ENCODE measurements at regions of chr2 and their contacts with region 1.

Region 1: GRCh38 chr2:73176881-73177644 is 25.3 kb upstream of the NOTO start:
- DNase-seq: peak; percentile 57
- ATAC-seq: peak; percentile 96
- H3K4me3 ChIP-seq: peak overlapping the region; percentile 27 to 45
- H3K27ac ChIP-seq: no peak overlapping the region; the same call in 1 of the 2 replicates
- H3K4me1 ChIP-seq: peaks cover 9 to 14% of the 10 kb centered on the region in 2 experiments; a peak in 3 of 4 replicates
- H3K27me3 ChIP-seq: no peaks in the 10 kb centered on the region
- CTCF ChIP-seq: peak; percentile 87 to 99 (median 95)
- POLR2A ChIP-seq: no peak
- RAD21 ChIP-seq: peak; percentile 97

Region 2: DNA sequence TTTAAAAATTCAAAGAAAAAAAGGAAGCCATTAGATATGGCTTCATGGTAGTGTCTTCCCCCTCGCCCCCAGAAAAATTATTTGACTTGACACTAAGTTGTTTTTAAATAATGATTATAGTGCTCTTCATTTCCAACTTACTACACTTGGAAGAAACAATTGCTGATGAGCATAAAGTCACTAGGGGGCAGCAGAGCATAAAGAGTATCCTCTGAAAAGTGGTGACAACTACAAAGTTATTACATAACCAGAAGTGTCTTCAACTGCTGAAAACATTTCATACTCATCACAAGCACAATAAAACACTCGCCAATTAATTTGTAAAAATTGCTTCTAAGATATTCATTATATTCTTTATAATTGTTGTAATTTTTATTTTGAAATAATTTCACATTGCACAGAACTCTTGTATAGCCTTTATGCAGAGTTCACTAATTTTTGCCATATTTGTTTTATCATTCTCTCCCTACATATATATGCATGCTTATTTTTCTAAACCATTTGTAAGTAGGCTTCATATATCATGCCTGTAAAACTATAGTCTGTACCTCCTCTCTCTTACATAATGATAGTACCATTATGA is 406.1 kb before region 1 on chr2:
- CTCF ChIA-PET with region 1: no interaction called
- POLR2A ChIA-PET with region 1: no interaction called
- RAD21 ChIA-PET with region 1: no interaction called
- intact Hi-C with region 1: loop called (anchors 5 kb)
- DNase-seq: peak; percentile 56
- ATAC-seq: peak; percentile 72; the same call in 1 of the 2 replicates
- H3K4me3 ChIP-seq: no peak overlapping the region
- H3K27ac ChIP-seq: no peak overlapping the region
- H3K4me1 ChIP-seq: 0 out of 4 replicates have a peak, but pooled peaks cover 0 to 4% of the 10 kb centered on the region in 2 experiments
- H3K27me3 ChIP-seq: no peaks in the 10 kb centered on the region
- CTCF ChIP-seq: peak; percentile 68 to 88 (median 85)
- POLR2A ChIP-seq: no peak
- RAD21 ChIP-seq: peak; percentile 93

Region 3: DNA sequence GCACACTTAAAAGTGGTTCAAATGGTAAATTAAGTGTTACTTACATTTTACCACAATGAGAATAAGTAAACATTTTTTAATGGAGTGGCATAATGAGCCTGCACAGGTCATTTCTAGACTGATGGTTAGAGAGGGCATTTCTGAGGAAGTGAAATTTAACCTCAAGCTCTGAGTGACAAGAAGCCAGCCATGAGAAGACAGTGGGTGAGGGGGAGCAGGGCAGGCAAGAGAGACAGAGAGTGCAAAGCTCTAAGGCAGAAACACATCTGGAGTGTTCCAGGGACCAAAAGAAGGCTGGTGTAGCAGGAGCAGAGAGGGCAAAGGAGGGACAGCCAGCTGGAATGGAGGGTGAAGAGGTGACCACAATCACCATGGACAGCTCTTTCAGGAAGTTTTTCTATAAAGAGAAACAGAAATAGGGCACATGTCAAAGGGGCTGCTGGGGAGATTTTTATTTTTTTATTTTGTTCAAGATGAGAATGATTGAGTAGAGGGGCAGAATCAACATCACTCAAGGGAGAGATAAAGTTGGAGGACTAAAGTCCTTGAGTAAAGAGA is 330.4 kb before region 1 on chr2:
- CTCF ChIA-PET with region 1: no interaction called
- POLR2A ChIA-PET with region 1: no interaction called
- RAD21 ChIA-PET with region 1: no interaction called
- intact Hi-C with region 1: no loop called
- DNase-seq: no peak
- ATAC-seq: no peak
- H3K4me3 ChIP-seq: no peak overlapping the region
- H3K27ac ChIP-seq: no peak overlapping the region
- H3K4me1 ChIP-seq: no peaks in the 10 kb centered on the region
- H3K27me3 ChIP-seq: no peaks in the 10 kb centered on the region; the same call in 1 of the 2 replicates
- CTCF ChIP-seq: no peak
- POLR2A ChIP-seq: no peak
- RAD21 ChIP-seq: no peak

Region 4: GRCh38 chr2:72908741-72909140 is 268.3 kb before region 1 on chr2:
- CTCF ChIA-PET with region 1: no interaction called
- POLR2A ChIA-PET with region 1: no interaction called
- RAD21 ChIA-PET with region 1: no interaction called
- intact Hi-C with region 1: loop called (anchors 5 kb)
- DNase-seq: no peak
- ATAC-seq: no peak
- H3K4me3 ChIP-seq: no peak overlapping the region
- H3K27ac ChIP-seq: no peak overlapping the region
- H3K4me1 ChIP-seq: peaks cover 0 to 3% of the 10 kb centered on the region in 2 experiments; a peak in 1 of 4 replicates
- H3K27me3 ChIP-seq: peaks cover 17% of the 10 kb centered on the region; the same call in 1 of the 2 replicates
- CTCF ChIP-seq: no peak
- POLR2A ChIP-seq: no peak
- RAD21 ChIP-seq: no peak

Region 5: DNA sequence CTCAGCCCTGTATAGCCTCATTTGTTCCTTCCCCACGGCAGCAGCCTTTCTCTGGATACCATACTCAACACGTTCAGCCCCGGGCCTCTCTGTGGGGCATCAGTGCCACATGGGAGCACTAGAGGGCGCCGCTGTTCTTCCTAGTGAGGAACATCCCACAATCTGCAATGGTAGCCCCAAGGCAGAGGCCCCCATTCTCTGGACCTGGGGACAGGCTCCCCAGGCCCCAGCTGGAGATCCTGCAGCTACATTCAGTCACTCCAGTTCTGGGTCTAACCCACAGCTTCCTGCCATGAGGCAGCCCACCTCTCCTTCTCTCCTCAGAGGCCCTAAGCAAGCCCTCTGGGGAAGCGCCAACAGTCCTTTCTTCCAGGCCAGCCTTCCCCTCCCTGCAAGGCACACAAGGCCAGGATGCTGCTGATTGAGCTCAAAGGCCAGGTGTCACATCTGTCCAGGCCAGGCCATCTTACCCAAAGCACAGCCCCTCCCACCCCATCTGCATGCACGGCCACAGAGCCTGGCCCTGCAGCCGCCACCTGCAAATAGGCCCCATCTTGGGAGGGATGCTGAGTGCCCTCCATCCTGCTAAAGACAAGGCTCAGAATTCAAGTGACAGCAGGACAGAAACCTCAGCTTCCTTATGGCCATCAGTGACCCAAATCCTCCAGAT is 91.2 kb before region 1 on chr2:
- CTCF ChIA-PET with region 1: interaction called, 6 read pairs
- POLR2A ChIA-PET with region 1: no interaction called
- RAD21 ChIA-PET with region 1: no interaction called
- intact Hi-C with region 1: loop called (anchors 5 kb)
- DNase-seq: no peak
- ATAC-seq: peak; percentile 93
- H3K4me3 ChIP-seq: no peak overlapping the region
- H3K27ac ChIP-seq: no peak overlapping the region
- H3K4me1 ChIP-seq: peaks cover 0 to 14% of the 10 kb centered on the region in 2 experiments; a peak in 2 of 4 replicates
- H3K27me3 ChIP-seq: no peaks in the 10 kb centered on the region
- CTCF ChIP-seq: peak; percentile 91 to 97 (median 97)
- POLR2A ChIP-seq: no peak
- RAD21 ChIP-seq: peak; percentile 95

Region 6: GRCh38 chr2:73187549-73187948 is 10.5 kb after region 1 on chr2:
- CTCF ChIA-PET with region 1: interaction called, 14 read pairs
- POLR2A ChIA-PET with region 1: no interaction called
- RAD21 ChIA-PET with region 1: no interaction called
- intact Hi-C with region 1: no loop called
- DNase-seq: no peak
- ATAC-seq: no peak
- H3K4me3 ChIP-seq: no peak overlapping the region
- H3K27ac ChIP-seq: no peak overlapping the region
- H3K4me1 ChIP-seq: no peaks in the 10 kb centered on the region
- H3K27me3 ChIP-seq: peaks cover 13% of the 10 kb centered on the region; the same call in 1 of the 2 replicates
- CTCF ChIP-seq: no peak
- POLR2A ChIP-seq: no peak
- RAD21 ChIP-seq: no peak

Region 7: DNA sequence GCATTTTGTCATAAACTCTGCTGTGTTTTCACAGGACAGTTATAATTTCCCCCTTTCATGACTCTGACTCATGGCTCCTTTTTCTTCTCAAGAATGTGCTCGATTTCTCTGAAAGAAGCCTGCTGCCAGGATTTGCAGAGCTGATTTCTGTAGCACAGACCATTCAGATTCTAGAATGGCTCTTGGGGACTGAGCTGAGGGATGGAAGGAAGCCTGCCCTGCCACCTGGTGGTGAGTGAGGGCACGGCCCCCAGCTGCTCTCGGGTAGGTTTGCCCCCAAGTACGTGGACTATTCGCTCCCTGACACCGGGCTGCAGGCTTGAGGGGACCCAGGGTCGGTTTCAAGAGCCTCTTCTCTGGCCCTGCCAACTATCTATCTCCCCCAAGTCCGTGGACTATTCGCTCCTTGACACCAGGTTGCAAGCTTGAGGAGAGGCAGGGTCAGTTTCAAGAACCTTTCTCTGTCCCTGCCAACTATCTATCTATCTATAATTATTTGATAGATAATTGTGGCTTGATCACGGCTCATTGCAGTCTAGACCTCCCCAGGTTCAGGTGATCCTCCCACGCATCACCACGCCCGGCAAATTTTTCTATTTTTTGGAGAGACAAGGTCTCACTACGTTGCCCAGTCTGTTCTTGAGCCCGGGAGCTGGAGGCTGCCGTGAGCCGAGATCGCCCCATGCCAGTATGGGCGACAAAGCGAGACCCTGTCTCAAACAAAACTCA is 35.5 kb after region 1 on chr2:
- CTCF ChIA-PET with region 1: interaction called, 31 read pairs
- POLR2A ChIA-PET with region 1: interaction called, 5 read pairs
- RAD21 ChIA-PET with region 1: interaction called in 1 of 2 experiments, 8 read pairs
- intact Hi-C with region 1: loop called (anchors 1 kb)
- DNase-seq: no peak
- ATAC-seq: peak; percentile 81
- H3K4me3 ChIP-seq: no peak overlapping the region
- H3K27ac ChIP-seq: no peak overlapping the region
- H3K4me1 ChIP-seq: peaks cover 3 to 34% of the 10 kb centered on the region in 2 experiments; a peak in 3 of 4 replicates
- H3K27me3 ChIP-seq: no peaks in the 10 kb centered on the region
- CTCF ChIP-seq: peak; percentile 78 to 99 (median 95)
- POLR2A ChIP-seq: no peak
- RAD21 ChIP-seq: peak; percentile 78

Measured in HCT116 (cell line).